Activated CD4-positive, alpha-beta T cell treated with anti-CD3 and anti-CD28 coated beads, Interleukin-2, amount 10 ng/mL, durations not matched to agents 24 days and 14 days (primary cell): ENCODE measurements at regions of chr5 and their contacts with region 1.

Region 1: DNA sequence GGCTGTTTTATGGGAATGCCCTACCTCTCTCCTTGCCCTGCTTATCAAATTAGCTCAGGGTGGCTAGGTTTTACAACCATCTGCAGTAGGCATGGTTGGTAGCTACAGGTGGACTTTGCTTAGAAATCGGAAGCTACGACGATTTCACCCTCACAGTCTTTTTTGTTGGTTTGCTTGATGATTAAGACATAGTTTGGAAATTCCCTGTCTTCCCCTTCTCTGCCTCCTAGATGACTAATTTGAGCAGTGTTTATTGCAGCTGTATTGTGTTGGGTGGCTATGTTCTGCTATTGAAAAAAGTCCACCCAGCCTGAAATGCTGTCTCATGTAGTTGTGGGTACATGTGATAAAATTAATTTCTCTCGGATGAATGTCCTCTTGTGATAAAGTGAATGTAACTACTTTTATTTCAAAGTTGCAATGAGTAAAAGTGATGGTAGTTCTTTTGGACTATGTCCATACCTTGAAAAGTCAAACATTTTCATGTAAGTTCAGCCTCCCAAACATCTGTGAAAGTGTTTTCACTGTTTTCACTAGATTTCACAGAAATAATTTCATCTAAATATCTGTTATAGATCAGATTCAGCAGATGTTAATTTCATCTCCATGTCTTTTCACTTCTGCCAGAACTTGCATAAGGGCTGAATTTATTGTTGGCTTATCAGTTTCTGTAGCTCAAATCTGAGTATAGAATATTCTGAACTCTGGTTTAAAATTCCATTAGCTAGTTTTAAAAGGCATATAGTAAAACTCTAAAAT is 37.3 kb upstream of the FYB1 start:
- DNase-seq: peak; percentile 73
- H3K4me3 Mint-ChIP-seq: peak overlapping the region; percentile 43
- H3K27ac Mint-ChIP-seq: no peak overlapping the region
- H3K4me1 Mint-ChIP-seq: peaks cover 18% of the 10 kb centered on the region
- H3K27me3 Mint-ChIP-seq: no peaks in the 10 kb centered on the region

Region 2: GRCh38 chr5:39231705-39232525 is 24.7 kb before region 1 on chr5:
- intact Hi-C with region 1: loop called (anchors 1 kb)
- DNase-seq: peak; percentile 62
- H3K4me3 Mint-ChIP-seq: peak overlapping the region; percentile 45
- H3K27ac Mint-ChIP-seq: peak overlapping the region; percentile 88
- H3K4me1 Mint-ChIP-seq: peaks cover 10% of the 10 kb centered on the region
- H3K27me3 Mint-ChIP-seq: no peaks in the 10 kb centered on the region

Region 3: GRCh38 chr5:39274398-39275085 is 17.9 kb after region 1 on chr5:
- intact Hi-C with region 1: loop called (anchors 1 kb)
- DNase-seq: peak; percentile 71
- H3K4me3 Mint-ChIP-seq: peak overlapping the region; percentile 80
- H3K27ac Mint-ChIP-seq: peak overlapping the region; percentile 93
- H3K4me1 Mint-ChIP-seq: peaks cover 26% of the 10 kb centered on the region
- H3K27me3 Mint-ChIP-seq: no peaks in the 10 kb centered on the region